ENCODE measurements at regions of chr2 and their contacts with region 1.

Region 1: DNA sequence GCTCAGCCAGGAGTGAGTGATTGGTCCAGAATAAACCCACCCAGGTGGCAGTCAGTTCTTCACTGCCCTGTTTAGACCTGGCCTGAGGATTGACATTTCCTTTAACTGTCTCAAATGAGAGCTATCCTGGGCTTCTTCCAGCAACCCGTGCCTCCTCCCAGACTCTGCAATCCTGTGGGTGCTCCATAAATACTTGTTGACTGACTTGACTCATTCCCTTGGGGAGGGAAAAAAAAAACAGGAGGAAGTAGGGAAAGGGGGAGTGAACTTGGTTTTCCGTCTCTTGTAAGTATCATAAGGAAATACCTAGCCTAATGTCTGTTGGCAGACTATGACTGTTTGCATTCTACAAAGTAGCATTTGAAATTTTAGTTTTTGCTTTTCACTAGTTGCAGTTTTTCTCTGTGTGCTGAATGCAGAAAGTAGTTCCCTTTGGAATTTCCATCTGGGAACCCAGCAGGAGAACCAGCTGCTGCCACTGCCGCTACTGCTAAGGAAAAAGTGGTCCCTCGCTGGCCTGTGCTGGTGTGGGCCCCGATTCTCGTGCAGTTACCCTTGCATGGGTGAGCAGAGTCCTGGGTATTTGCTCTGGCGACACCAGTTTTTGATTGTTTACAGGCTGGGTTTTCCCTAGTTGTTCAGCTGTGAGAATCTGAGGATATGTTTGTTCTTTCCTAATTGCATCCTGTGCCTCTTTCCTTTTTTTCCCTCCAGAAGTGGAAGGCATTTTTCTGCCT is 78.8 kb downstream of the TGOLN2 start:
- DNase-seq: no peak
- ATAC-seq: peak; percentile 14
- H3K4me3 Mint-ChIP-seq: peak overlapping the region; percentile 50
- H3K27ac Mint-ChIP-seq: peak overlapping the region; percentile 97
- H3K4me1 Mint-ChIP-seq: peaks cover 96% of the 10 kb centered on the region
- H3K27me3 Mint-ChIP-seq: no peaks in the 10 kb centered on the region
- CTCF ChIP-seq: no peak

Region 2: DNA sequence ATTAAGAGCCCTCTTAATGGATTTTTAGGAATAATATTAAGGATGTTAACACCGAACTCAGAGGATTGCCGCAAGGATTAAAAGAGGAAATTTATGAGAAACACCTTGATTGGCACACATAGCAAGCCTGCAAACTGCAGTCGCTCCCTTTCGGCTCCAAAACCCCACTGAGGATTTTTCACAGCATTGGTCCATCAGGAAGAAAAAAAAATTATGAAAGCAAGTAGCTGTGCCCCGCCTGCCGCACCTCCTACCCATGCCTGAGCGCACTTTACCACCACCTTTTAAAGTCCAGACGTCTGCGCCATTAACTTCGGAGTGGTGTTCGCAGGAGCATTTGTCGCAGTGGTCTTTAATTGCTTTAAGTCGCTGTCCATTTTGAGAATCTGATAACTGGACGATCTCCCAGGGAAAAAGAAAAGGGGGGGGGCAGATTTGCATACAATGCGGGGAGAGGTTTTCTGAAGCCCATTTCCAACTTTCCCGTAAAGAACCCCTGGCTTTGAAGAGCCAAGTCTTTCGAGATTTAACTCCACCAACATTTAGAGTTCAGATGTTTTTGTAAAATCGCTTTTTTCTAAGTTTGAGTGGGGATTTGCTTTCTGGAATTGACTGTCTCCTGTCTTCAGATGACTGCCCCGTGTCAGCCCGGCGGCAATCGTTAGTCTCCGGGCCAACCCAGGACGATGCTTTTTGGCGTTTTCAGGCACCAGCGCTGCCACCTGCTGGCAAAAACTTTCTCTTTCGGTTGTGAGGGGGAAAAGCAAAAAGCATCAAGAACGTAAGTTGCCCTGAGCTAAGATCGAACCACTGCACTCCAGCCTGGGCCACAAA is 367.1 kb before region 1 on chr2:
- CTCF ChIA-PET with region 1: no interaction called
- POLR2A ChIA-PET with region 1: no interaction called
- DNase-seq: peak; percentile 85
- ATAC-seq: peak; percentile 63
- H3K4me3 Mint-ChIP-seq: peak overlapping the region; percentile 72
- H3K27ac Mint-ChIP-seq: no peak overlapping the region
- H3K4me1 Mint-ChIP-seq: peaks cover 10% of the 10 kb centered on the region
- H3K27me3 Mint-ChIP-seq: peaks cover 88% of the 10 kb centered on the region
- CTCF ChIP-seq: peak; percentile 37; the same call in 1 of the 2 replicates

Region 3: DNA sequence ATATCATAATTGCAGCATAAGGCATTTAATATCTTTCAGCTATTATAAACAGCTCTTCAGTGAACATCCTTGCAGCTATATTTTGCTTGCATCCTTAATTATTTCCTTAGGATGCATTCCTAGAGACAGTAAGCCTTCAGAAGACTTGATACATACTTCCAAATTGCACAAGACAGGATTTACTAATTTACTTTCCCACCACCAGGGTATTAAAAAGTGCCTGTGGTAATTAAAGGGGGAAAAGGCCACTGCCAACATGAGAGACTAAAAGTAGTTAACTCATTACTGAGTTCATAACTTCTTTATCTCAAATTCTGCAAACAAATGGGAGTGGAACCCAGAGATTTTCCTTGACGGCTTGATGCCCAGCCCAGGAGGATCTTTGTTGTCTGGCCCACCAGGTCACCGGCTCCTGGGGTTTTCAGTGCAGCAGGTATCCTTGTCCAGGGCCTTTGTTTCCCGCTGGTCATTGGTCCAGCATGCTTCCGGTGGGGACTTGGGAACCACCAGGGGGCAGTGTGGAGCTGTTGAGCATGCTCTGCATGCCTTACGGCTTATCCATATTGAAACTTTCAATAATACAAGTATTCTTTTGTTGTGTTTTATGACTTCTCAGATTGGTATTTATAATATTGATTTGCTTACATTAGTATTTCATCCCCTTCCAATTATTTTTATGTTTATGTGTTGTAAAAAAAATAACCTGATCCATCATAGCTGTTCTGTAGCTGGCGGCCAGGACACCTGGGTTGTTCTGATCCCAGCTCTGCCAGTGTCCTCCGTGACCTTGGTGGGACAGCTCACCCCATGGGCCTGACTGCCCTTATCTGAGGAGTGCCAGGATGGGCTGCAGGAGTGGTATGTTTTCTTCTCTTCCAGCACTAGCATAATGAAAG is 17.5 kb after region 1 on chr2:
- CTCF ChIA-PET with region 1: interaction called, 21 read pairs
- POLR2A ChIA-PET with region 1: no interaction called
- DNase-seq: peak; percentile 85
- ATAC-seq: peak; percentile 63
- H3K4me3 Mint-ChIP-seq: no peak overlapping the region
- H3K27ac Mint-ChIP-seq: peak overlapping the region; percentile 67
- H3K4me1 Mint-ChIP-seq: peaks cover 72% of the 10 kb centered on the region
- H3K27me3 Mint-ChIP-seq: no peaks in the 10 kb centered on the region
- CTCF ChIP-seq: peak; percentile 95

Region 4: DNA sequence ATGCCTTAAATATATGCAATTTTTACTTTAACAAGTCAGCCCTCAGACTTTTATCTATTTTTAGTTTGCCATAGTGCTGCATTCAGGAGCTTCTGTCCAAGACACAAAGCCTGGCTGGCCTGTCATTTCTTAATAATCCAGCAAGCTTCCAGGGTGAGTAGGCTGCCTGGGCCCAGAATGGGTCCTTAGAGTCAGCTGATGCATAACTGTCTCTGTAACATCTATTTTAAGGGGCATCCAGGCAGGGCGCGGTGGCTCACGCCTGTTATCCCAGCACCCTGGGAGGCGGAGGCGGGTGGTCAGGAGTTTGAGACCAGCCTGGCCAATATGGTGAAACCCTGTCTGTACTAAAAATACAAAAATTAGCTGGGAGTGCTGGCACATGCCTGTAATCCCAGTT is 433.4 kb after region 1 on chr2:
- CTCF ChIA-PET with region 1: no interaction called
- POLR2A ChIA-PET with region 1: no interaction called
- DNase-seq: no peak
- ATAC-seq: no peak
- H3K4me3 Mint-ChIP-seq: no peak overlapping the region
- H3K27ac Mint-ChIP-seq: no peak overlapping the region
- H3K4me1 Mint-ChIP-seq: peaks cover 11% of the 10 kb centered on the region
- H3K27me3 Mint-ChIP-seq: peaks cover 7% of the 10 kb centered on the region
- CTCF ChIP-seq: no peak